Sigmoid colon (tissue), 7 donors: ENCODE measurements at regions of chr15 and their contacts with region 1.

Region 1: DNA sequence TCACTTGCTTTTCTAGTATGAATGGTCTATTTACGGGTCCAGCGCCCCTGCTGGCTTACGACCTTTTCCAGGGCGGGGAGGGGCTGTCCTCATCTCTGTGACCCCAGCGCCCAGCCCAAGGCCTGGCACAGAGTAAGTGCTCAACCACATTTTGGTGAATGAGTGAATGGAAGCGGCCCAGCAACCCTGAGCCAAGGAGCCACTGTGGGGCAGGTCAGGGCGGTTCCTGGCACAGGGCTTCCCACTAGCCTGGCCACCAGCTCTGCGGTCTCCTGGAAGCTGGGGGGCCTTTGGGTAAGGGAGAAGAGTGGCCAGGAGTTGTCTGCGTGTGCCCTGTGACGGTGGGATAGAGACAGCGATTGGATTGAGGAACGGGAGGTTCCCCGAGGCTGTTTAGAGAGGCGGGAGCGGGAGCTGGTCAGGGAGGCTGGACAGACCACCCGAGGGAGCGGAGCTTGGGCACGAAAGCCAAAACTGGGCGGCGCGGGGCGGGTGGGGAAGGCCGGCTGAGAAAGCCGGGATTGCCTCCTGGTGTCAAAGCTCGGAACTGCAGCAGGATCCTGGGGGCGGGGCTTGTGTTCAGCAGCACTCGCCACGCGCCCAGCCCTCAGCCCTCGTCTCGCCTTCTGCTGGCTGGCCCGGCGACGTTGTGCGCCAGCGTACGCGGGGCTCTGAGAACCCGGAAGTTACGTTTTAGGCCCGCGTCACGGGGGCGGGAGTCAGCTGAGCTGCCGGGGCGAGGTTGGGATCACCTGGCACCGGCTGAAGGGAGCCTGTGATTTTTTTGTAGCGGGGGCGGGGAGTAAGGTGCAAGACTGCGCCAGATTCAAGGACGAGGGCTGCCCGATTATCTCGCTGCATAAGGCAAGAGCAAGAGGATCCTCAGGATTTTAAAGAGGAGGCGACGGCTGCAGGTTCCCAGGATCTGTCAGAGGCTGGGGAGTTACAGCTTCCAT is at the start of gene VPS18:
- DNase-seq: peak; percentile 99
- H3K4me3 ChIP-seq: peak within 1 kb of the TSS; percentile 56 to 84 (median 82)
- H3K27ac ChIP-seq: peak within 1 kb of the TSS; percentile 87 to 96 (median 92)
- H3K4me1 ChIP-seq: peaks cover 0 to 20% (median 20%) of the 10 kb centered on the region in 4 donors
- H3K27me3 ChIP-seq: no peaks in the 10 kb centered on the region
- CTCF ChIP-seq: peak; percentile 94 to 99 (median 96)
- EP300 ChIP-seq: peak in 2 of 4 donors; percentile 28 to 93
- POLR2A ChIP-seq: peak; percentile 74 to 85
- total RNA-seq, gene VPS18: 17.4 to 19.6 (median 19.0) TPM

Region 2: DNA sequence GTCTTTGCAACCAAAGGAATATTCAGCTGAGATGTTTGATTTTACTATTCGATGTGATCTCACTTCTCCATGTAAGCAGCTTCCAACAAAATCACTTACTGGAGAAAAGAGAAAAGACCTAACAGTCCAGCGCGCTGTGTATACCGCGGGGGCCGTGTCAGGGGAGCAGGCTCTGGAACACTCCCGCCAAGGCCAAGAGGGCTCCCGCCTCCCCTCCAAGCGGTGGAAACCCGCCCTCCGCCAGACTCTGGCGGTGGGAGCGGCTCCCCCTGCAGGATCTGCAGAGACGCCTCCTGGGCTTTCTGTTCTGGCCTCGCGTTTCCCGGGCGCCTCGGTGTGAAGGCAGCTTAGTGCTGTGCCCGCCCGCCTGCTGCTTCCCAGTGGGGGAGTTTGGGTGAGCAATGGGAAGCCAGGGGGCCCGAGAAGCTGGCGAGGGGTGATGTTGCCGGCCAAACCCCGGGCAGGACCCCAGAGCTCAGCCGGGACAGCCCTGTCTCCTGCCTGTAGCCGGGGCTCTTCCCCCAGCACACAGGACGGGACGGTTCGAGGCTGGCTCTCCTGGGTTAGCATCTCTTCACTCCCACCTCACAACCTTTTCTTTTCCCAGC is 386.9 kb before region 1 on chr15:
- intact Hi-C with region 1: loop called (anchors 10 kb)
- DNase-seq: peak; percentile 89
- H3K4me3 ChIP-seq: peak overlapping the region; percentile 4 to 38 (median 32)
- H3K27ac ChIP-seq: peak overlapping the region in 2 of 4 donors; percentile 32 to 35
- H3K4me1 ChIP-seq: peaks cover 0 to 21% (median 11%) of the 10 kb centered on the region in 4 donors
- H3K27me3 ChIP-seq: no peaks in the 10 kb centered on the region
- CTCF ChIP-seq: peak; percentile 44 to 68 (median 58)
- EP300 ChIP-seq: no peak
- POLR2A ChIP-seq: no peak

Region 3: GRCh38 chr15:40684381-40684780 is 209.6 kb before region 1 on chr15:
- intact Hi-C with region 1: loop called (anchors 5 kb)
- DNase-seq: no peak
- H3K4me3 ChIP-seq: no peak overlapping the region
- H3K27ac ChIP-seq: no peak overlapping the region
- H3K4me1 ChIP-seq: no peaks in the 10 kb centered on the region
- H3K27me3 ChIP-seq: no peaks in the 10 kb centered on the region
- CTCF ChIP-seq: no peak
- EP300 ChIP-seq: no peak
- POLR2A ChIP-seq: no peak

Region 4: DNA sequence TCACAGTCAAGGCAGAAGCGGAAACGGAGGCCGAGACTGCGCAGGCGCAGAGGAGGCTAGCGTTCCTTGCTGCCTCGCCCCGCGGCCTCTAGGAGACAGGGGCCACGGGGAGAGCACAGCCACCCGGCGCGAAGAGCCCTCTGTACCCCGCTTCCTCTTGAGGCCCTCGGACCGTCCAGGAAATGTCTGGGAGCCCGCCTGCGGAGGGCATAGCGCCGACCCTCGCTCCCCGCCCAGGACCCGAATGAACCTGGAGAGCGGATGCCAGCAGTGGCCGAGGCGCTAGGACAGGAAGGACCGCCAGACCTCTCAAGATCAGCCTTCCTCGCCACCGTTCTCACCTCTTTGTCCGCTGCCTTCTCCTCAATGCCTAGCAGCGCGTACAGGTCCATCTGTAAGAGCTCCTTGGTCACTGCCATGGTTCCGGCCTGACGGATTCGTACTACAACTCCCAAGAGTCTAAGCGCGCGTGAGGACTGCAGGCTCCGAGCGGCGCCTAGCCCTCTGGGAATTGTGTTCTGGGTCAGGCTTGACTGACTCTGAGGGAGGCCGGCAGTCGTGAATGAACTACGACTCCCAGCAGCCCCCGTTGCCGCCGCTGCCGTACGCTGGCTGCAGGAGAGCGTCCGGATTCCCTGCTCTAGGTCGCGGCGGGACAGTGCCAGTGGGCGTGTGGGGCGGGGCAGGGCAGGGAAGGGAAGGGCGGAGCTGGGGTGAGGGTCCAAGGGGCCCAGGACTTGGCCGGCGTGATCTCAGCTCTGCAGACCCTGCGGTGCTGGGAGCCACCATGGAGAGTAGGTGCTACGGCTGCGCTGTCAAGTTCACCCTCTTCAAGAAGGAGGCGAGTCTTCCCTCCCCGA is 86.8 kb before region 1 on chr15 and contains the starts of genes DNAJC17 and ZFYVE19:
- intact Hi-C with region 1: loop called (anchors 1 kb)
- DNase-seq: peak; percentile 98
- H3K4me3 ChIP-seq: peak within 1 kb of the TSS; percentile 85 to 98 (median 94)
- H3K27ac ChIP-seq: peak within 1 kb of the TSS; percentile 94 to 98 (median 96)
- H3K4me1 ChIP-seq: peaks cover 0 to 26% (median 19%) of the 10 kb centered on the region in 4 donors
- H3K27me3 ChIP-seq: no peaks in the 10 kb centered on the region
- CTCF ChIP-seq: peak in 2 of 4 experiments; percentile 17 to 19
- EP300 ChIP-seq: peak in 1 of 4 donors; percentile 18
- POLR2A ChIP-seq: peak in 1 of 2 donors; percentile 42
- total RNA-seq, gene DNAJC17: 9.1 to 25.8 (median 12.8) TPM
- total RNA-seq, gene ZFYVE19: 17.5 to 49.6 (median 29.9) TPM

Region 5: GRCh38 chr15:40928821-40929659 is 35.0 kb after region 1 on chr15 and contains the start of gene DLL4:
- intact Hi-C with region 1: no loop called
- DNase-seq: no peak
- H3K4me3 ChIP-seq: peak within 1 kb of the TSS; percentile 17 to 52 (median 48)
- H3K27ac ChIP-seq: peak within 1 kb of the TSS in 3 of 4 donors; percentile 34 to 47 (median 40)
- H3K4me1 ChIP-seq: peaks cover 0 to 58% (median 56%) of the 10 kb centered on the region in 4 donors
- H3K27me3 ChIP-seq: peaks cover 66 to 86% (median 84%) of the 10 kb centered on the region in 3 donors
- CTCF ChIP-seq: no peak
- EP300 ChIP-seq: no peak
- POLR2A ChIP-seq: peak in 1 of 2 donors; percentile 77
- total RNA-seq, gene DLL4: 3.5 to 5.4 (median 4.6) TPM

Region 6: DNA sequence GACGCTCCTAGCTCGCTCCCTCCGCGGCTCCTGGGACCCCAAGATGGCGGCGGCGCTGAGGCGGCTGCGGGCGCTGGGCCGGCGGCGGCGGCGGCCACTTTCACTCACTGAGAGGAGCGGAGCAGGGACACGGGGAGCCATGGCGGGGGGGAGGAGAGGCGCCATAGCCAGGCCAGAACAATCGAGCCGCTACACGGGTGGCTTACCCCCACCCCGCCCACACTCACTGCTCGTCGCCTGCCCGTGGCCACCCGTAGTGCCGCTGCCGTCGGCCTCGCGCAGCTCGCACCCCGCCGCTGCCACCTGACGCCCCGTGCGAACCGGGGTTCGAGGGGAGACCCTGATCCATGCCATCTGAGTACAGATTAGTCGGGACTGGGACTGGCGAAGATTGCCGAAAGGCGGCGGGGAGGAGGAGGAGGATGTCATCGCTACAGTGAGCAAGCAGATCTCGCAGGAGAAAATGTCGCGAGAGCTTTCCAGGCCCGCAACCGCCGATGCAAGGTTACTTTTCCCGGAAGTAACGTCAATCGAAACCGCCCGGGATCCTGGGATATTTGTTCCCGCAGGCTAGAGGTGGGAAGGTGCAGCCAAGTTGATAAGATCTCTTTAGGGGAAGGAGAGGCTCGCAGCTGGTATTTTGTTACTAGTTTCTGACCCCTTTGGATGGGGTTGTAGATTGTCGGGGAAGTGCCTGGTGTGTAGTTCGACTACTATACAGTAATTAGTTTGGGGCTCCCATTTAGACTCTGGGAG is 222.3 kb after region 1 on chr15 and contains the start of gene INO80:
- intact Hi-C with region 1: loop called (anchors 1 kb)
- DNase-seq: peak; percentile 99
- H3K4me3 ChIP-seq: peak within 1 kb of the TSS; percentile 89 to 100 (median 96)
- H3K27ac ChIP-seq: peak within 1 kb of the TSS; percentile 96 to 100 (median 100)
- H3K4me1 ChIP-seq: peaks cover 0 to 18% (median 8%) of the 10 kb centered on the region in 4 donors
- H3K27me3 ChIP-seq: peaks cover 0 to 1% (median 0%) of the 10 kb centered on the region in 3 donors
- CTCF ChIP-seq: no peak
- EP300 ChIP-seq: peak in 1 of 4 donors; percentile 69
- POLR2A ChIP-seq: peak; percentile 46 to 90
- total RNA-seq, gene INO80: 17.1 to 36.6 (median 19.4) TPM